ENCODE measurements at regions of chr5 and their contacts with region 1.

Region 1: GRCh38 chr5:96536991-96537785 is 104.1 kb upstream of the PCSK1 start:
- DNase-seq: no peak
- H3K4me3 Mint-ChIP-seq: no peak overlapping the region
- H3K27ac Mint-ChIP-seq: peak overlapping the region; percentile 83
- H3K4me1 Mint-ChIP-seq: peaks cover 32% of the 10 kb centered on the region
- H3K27me3 Mint-ChIP-seq: no peaks in the 10 kb centered on the region

Region 2: DNA sequence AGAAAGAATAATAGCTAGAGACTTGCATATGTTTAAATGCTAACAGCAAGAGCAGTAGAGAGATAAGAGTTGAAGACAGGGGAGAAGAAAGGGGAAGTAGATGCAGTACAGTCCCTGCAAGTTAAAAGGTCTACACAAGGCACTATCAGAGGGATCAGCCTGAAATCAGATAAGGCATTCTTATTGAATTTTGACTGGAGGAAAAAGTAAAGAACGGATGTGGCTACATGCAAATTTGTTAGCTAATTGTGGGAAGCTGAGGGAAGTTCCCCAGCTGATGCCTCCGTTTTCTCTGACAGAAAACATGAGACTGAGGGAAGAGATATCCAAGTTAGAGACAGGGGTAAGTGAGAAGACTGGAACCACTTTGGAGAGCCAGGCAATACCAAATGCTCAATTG is 819.0 kb before region 1 on chr5:
- CTCF ChIA-PET with region 1: no interaction called
- intact Hi-C with region 1: loop called (anchors 5 kb)
- DNase-seq: peak; percentile 60
- H3K4me3 Mint-ChIP-seq: no peak overlapping the region
- H3K27ac Mint-ChIP-seq: no peak overlapping the region
- H3K4me1 Mint-ChIP-seq: peaks cover 22% of the 10 kb centered on the region
- H3K27me3 Mint-ChIP-seq: peaks cover 11% of the 10 kb centered on the region

Region 3: DNA sequence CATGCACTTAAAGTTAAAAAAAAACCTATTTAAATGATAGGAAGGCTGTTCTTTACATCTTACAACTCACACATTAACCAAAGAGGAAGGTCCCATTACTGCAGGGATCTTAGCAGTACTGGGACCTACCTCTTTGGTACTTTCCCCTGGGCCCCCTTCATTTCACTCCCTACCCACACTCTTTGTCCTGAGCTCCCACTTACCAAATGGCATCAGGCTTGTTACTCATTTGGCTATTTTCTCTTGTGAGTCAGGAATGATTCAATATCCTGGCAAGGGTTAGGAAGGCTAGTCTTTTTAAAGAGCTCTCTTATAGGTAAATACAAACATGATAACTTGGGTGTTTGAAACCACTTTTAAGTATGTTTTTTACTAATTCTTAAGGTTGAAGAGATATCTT is 458.1 kb before region 1 on chr5:
- CTCF ChIA-PET with region 1: no interaction called
- intact Hi-C with region 1: loop called (anchors 2 kb)
- DNase-seq: peak; percentile 71
- H3K4me3 Mint-ChIP-seq: no peak overlapping the region
- H3K27ac Mint-ChIP-seq: peak overlapping the region; percentile 77
- H3K4me1 Mint-ChIP-seq: peaks cover 38% of the 10 kb centered on the region
- H3K27me3 Mint-ChIP-seq: peaks cover 9% of the 10 kb centered on the region

Region 4: DNA sequence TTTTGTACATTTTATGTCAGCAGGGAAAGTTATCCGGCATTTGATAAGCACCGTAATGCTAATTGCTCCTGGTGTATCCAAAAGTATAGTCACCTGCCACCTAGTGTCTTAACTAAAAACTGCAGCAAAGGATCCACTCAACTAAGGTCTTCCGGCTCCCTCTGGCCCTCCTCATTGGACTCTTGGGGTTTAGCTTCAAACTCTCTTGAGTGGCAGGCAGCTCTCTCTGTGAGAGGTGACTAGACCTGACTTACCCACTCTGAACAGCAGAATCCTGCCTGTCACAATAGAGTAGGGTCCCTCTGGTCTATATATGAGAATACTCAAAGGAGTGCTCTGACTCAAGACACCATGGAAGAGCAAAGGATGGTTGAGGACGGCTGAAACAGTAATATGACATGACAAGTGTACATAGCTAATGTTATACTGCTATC is 64.6 kb after region 1 on chr5:
- CTCF ChIA-PET with region 1: interaction called, 4 read pairs
- intact Hi-C with region 1: loop called (anchors 2 kb)
- DNase-seq: peak; percentile 68
- H3K4me3 Mint-ChIP-seq: no peak overlapping the region
- H3K27ac Mint-ChIP-seq: no peak overlapping the region
- H3K4me1 Mint-ChIP-seq: peaks cover 10% of the 10 kb centered on the region
- H3K27me3 Mint-ChIP-seq: peaks cover 5% of the 10 kb centered on the region

Region 5: GRCh38 chr5:96896806-96897205 is 359.6 kb after region 1 on chr5:
- CTCF ChIA-PET with region 1: no interaction called
- intact Hi-C with region 1: loop called (anchors 1 kb)
- DNase-seq: peak; percentile 79
- H3K4me3 Mint-ChIP-seq: peak overlapping the region; percentile 79
- H3K27ac Mint-ChIP-seq: peak overlapping the region; percentile 98
- H3K4me1 Mint-ChIP-seq: peaks cover 62% of the 10 kb centered on the region
- H3K27me3 Mint-ChIP-seq: no peaks in the 10 kb centered on the region

Region 6: GRCh38 chr5:97183100-97183929 is 646.1 kb after region 1 on chr5 and contains the start of gene RIOK2:
- CTCF ChIA-PET with region 1: no interaction called
- intact Hi-C with region 1: loop called (anchors 1 kb)
- DNase-seq: peak; percentile 97
- H3K4me3 Mint-ChIP-seq: peak within 1 kb of the TSS; percentile 93
- H3K27ac Mint-ChIP-seq: peak within 1 kb of the TSS; percentile 99
- H3K4me1 Mint-ChIP-seq: peaks cover 33% of the 10 kb centered on the region
- H3K27me3 Mint-ChIP-seq: no peaks in the 10 kb centered on the region
- total RNA-seq, gene RIOK2: 29.1 to 32.0 TPM

Measured in activated naive CD4-positive, alpha-beta T cell treated with anti-CD3 and anti-CD28 coated beads for 36 hours (primary cell).